ENCODE measurements at regions of chr11 and their contacts with region 1.

Region 1: DNA sequence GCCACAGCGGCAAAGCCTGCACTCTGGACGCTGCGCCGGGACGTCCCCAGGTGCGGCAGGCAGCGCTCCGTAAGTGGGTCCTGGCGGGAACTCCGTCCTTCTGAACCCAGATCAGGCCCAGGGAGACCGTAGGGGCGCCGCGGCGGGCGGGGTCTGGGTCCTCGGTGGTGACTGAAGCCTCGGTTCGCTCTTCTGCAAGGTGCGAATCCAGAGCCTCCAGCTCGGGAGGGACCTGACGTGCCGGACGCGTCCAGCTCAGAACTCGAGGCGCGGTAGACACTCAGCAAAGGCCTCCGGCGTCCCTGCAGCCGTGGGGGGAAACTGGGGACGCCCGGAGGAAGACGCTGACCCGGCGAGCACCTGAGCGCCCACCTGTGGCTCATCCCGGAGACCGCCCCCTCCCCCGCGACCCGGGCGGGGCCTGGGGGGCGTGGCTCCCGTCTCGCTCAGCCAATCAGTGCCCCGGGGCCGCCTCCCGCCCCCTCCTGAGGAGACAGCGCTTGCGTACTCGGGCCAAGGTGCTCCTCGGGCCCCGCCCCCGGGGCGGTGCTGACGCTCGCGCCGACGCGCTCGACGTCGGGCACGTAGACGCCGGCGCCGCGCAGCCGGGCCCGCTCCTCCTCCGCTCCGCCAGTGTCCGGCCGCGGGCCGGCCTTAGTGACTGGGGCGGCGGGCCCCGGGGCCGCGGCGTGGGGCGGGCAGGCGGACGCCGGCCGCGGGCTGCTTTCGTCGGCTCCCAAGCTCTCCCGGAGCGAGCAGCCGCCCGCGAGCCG is at the start of gene PPFIA1:
- DNase-seq: peak; percentile 97
- ATAC-seq: peak; percentile 95
- H3K4me3 Mint-ChIP-seq: peak within 1 kb of the TSS; percentile 92
- H3K27ac Mint-ChIP-seq: peak within 1 kb of the TSS; percentile 89
- H3K4me1 Mint-ChIP-seq: peaks cover 31% of the 10 kb centered on the region
- H3K27me3 Mint-ChIP-seq: peaks cover 10% of the 10 kb centered on the region
- total RNA-seq, gene PPFIA1: 26.5 to 40.5 TPM

Region 2: GRCh38 chr11:69675811-69676371 is 594.4 kb before region 1 on chr11:
- CTCF ChIA-PET with region 1: no interaction called
- POLR2A ChIA-PET with region 1: no interaction called
- intact Hi-C with region 1: loop called in 1 of 2 experiments (anchors 1 kb)
- DNase-seq: no peak
- ATAC-seq: no peak
- H3K4me3 Mint-ChIP-seq: peak overlapping the region; percentile 89
- H3K27ac Mint-ChIP-seq: no peak overlapping the region
- H3K4me1 Mint-ChIP-seq: peaks cover 20% of the 10 kb centered on the region
- H3K27me3 Mint-ChIP-seq: peaks cover 2% of the 10 kb centered on the region

Region 3: DNA sequence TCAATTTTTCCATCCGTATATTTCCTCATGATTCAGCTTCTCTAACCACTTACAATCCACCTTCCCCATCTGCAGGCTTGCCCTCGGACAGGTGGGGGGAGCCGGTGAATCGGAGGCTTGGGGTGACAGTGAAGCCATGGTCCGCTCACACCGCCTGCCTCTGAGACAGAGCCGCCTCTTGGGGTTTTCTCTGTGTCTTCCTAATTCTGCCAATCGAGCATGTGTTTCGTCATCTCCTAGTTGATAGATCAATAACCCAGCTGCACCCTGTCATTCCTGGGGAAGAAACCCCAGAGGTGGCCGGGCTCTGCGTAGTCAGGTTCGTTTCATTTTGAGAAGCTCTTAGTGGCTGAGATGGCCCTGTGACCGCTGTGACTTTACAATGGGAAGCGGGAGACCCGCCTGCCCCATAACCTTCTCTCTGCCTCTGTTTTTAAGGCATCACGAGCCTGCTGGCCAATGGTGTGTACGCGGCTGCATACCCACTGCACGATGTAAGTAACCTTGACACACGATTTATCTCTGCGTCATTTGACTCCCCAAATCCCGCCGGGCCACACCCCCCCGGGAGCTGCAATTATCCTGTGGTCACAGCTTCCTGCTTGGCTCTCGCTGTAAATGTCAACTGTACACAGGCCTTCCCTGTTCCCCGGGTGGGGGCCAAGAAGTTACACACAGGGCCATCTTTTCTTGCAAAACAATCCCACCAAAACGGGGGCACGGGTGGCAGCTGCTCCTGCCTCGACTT is 158.8 kb before region 1 on chr11:
- CTCF ChIA-PET with region 1: no interaction called
- POLR2A ChIA-PET with region 1: no interaction called
- intact Hi-C with region 1: no loop called
- DNase-seq: no peak
- ATAC-seq: no peak
- H3K4me3 Mint-ChIP-seq: no peak overlapping the region
- H3K27ac Mint-ChIP-seq: no peak overlapping the region
- H3K4me1 Mint-ChIP-seq: no peaks in the 10 kb centered on the region
- H3K27me3 Mint-ChIP-seq: peaks cover 2% of the 10 kb centered on the region

Region 4: GRCh38 chr11:70352601-70353000 is 82.3 kb after region 1 on chr11:
- CTCF ChIA-PET with region 1: no interaction called
- POLR2A ChIA-PET with region 1: no interaction called
- intact Hi-C with region 1: no loop called
- DNase-seq: no peak
- ATAC-seq: no peak
- H3K4me3 Mint-ChIP-seq: no peak overlapping the region
- H3K27ac Mint-ChIP-seq: no peak overlapping the region
- H3K4me1 Mint-ChIP-seq: no peaks in the 10 kb centered on the region
- H3K27me3 Mint-ChIP-seq: no peaks in the 10 kb centered on the region

Measured in activated CD4-positive, alpha-beta T cell treated with anti-CD3 and anti-CD28 coated beads for 36 hours (primary cell).